A673 (cell line): ENCODE measurements at regions of chr13 and their contacts with region 1.

Region 1: GRCh38 chr13:65808061-65808460 is 1422.1 kb downstream of the PCDH9 start:
- DNase-seq: no peak
- H3K4me3 ChIP-seq: no peak overlapping the region
- H3K27ac ChIP-seq: no peak overlapping the region
- H3K4me1 ChIP-seq: no peaks in the 10 kb centered on the region
- H3K27me3 ChIP-seq: no peaks in the 10 kb centered on the region
- CTCF ChIP-seq: no peak

Region 2: DNA sequence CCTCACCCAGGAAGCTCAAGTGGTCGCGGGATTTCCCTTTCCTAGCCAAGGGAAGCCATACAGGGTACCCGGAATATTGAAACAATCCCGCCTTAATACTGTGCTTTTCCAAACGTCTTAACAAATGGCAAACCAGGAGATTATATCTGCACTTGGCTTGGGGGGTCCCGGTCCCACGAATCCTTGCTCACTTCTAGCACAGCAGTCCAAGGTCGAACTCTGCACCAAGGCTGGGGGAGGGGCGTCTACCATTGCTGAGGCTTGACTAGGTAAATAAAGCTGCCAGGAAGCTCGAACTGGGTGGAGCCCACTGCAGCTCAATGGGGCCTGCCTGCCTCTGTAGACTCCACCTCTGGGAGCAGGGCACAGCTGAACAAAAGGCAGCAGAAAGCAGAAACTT is 222.7 kb before region 1 on chr13:
- CTCF ChIA-PET with region 1: no interaction called
- POLR2A ChIA-PET with region 1: interaction called, 15 read pairs
- intact Hi-C with region 1: no loop called
- DNase-seq: no peak
- H3K4me3 ChIP-seq: no peak overlapping the region
- H3K27ac ChIP-seq: no peak overlapping the region
- H3K4me1 ChIP-seq: no peaks in the 10 kb centered on the region
- H3K27me3 ChIP-seq: no peaks in the 10 kb centered on the region
- CTCF ChIP-seq: no peak

Region 3: GRCh38 chr13:65943708-65944107 is 135.6 kb after region 1 on chr13:
- CTCF ChIA-PET with region 1: no interaction called
- POLR2A ChIA-PET with region 1: no interaction called
- intact Hi-C with region 1: no loop called
- DNase-seq: no peak
- H3K4me3 ChIP-seq: no peak overlapping the region
- H3K27ac ChIP-seq: no peak overlapping the region
- H3K4me1 ChIP-seq: no peaks in the 10 kb centered on the region
- H3K27me3 ChIP-seq: no peaks in the 10 kb centered on the region
- CTCF ChIP-seq: no peak